Naive thymus-derived CD4-positive, alpha-beta T cell (primary cell): ENCODE measurements at regions of chr7 and their contacts with region 1.

Region 1: DNA sequence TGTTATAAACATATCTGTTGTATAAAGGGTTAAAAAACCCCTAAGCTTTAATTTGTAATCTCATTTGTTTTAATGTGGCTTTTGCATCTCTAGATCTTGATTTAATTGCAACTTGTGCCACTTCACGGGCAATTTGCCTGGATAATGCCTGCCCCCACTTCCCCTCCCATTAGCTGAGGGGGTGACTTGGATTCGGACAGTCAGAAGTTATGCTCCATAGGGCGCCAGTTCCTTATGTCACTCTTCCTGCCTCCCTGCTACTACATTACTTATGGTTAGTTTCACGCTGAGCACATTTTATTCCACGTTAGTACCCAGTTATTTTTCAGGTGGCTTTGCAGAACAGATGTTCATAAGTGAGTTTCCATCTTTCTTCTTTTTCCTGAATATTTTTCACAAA is 1015.2 kb upstream of the PHF14 start:
- DNase-seq: no peak
- ATAC-seq: no peak
- H3K4me3 ChIP-seq: no peak overlapping the region
- H3K4me3 Mint-ChIP-seq: no peak overlapping the region
- H3K27ac ChIP-seq: no peak overlapping the region
- H3K27ac Mint-ChIP-seq: no peak overlapping the region
- H3K4me1 ChIP-seq: no peaks in the 10 kb centered on the region
- H3K4me1 Mint-ChIP-seq: no peaks in the 10 kb centered on the region
- H3K27me3 ChIP-seq: no peaks in the 10 kb centered on the region
- H3K27me3 Mint-ChIP-seq: no peaks in the 10 kb centered on the region

Region 2: GRCh38 chr7:9890092-9890491 is 68.4 kb before region 1 on chr7:
- CTCF ChIA-PET with region 1: no interaction called
- POLR2A ChIA-PET with region 1: no interaction called
- intact Hi-C with region 1: loop called in 1 of 2 experiments (anchors 10 kb)
- DNase-seq: no peak
- ATAC-seq: no peak
- H3K4me3 ChIP-seq: no peak overlapping the region
- H3K4me3 Mint-ChIP-seq: no peak overlapping the region
- H3K27ac ChIP-seq: no peak overlapping the region
- H3K27ac Mint-ChIP-seq: no peak overlapping the region
- H3K4me1 ChIP-seq: no peaks in the 10 kb centered on the region
- H3K4me1 Mint-ChIP-seq: no peaks in the 10 kb centered on the region
- H3K27me3 ChIP-seq: no peaks in the 10 kb centered on the region
- H3K27me3 Mint-ChIP-seq: no peaks in the 10 kb centered on the region

Region 3: DNA sequence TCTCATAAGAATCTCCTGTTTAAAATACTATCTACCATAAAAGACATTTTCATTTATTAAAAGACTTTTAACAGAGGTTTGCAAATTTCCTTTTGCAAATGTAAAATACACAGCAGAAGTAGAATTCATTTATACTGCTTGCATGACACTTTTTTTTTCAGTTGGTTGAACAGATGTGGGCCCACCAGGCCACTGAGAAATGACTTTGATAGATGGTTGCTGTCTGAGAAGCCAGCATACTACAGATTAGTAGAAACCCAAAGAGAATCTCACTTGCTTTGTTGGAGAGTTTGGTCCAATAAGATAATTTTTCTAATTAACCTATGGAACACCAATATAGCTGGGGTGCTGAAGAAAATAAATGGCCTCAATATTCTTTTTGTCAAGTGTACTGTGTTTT is 1081.5 kb after region 1 on chr7:
- CTCF ChIA-PET with region 1: no interaction called
- POLR2A ChIA-PET with region 1: no interaction called
- intact Hi-C with region 1: no loop called
- DNase-seq: no peak
- ATAC-seq: no peak
- H3K4me3 ChIP-seq: no peak overlapping the region
- H3K4me3 Mint-ChIP-seq: no peak overlapping the region
- H3K27ac ChIP-seq: no peak overlapping the region
- H3K27ac Mint-ChIP-seq: no peak overlapping the region
- H3K4me1 ChIP-seq: no peaks in the 10 kb centered on the region
- H3K4me1 Mint-ChIP-seq: peaks cover 0 to under 1% (median 0%) of the 10 kb centered on the region in 7 donors
- H3K27me3 ChIP-seq: no peaks in the 10 kb centered on the region
- H3K27me3 Mint-ChIP-seq: no peaks in the 10 kb centered on the region